Posterior vena cava (tissue), 2 donors: ENCODE measurements at regions of chr12 and their contacts with region 1.

Region 1: GRCh38 chr12:34022079-34022830 is at the start of gene ALG10:
- DNase-seq: peak; percentile 99
- total RNA-seq, gene ALG10: 5.2 to 7.9 TPM

Region 2: DNA sequence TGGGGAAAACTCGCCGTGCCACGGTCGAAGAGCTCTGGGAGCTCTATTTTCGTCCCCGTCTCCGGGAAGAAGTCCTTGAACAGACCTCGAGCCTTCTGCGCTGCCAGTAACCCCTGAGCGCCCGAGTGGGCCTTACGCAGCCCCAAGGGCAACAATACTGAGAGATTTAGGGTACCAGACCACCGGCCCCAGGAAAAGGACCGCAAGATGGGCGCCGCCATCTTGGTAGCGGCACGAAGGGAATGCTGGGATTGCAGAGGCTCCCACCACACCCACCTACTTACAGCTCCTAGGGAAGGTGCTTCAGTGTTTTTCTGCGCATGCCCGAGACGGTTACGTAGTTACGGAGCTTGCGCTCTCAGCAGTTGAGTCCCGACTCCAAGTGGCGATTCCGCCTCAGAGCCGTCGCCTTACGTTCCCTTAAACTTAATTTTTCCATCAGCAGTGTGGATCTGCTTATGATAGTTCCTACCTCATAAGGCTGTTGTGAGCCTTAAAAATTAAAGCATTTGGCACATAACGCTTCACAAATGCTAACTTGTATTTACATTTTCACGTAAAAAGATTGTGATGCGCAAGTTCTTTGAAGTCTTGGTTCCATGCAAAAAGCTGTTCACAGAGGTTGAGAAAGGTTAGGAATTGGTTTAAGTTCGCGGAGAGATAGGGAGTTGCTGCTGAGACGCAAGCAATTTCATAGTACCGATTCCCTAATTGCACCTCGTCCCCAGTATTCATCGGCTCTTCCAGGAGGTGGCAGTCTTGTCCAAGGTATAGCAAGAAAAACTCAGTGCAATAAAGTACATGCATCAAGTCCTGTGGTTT is 1266.4 kb before region 1 on chr12 and contains the start of gene YARS2:
- intact Hi-C with region 1: loop called in 1 of 2 experiments (anchors 10 kb)
- DNase-seq: peak; percentile 97
- total RNA-seq, gene YARS2: 9.2 to 10.3 TPM

Region 3: GRCh38 chr12:33671676-33672075 is 350.6 kb before region 1 on chr12:
- intact Hi-C with region 1: no loop called
- DNase-seq: no peak

Region 4: DNA sequence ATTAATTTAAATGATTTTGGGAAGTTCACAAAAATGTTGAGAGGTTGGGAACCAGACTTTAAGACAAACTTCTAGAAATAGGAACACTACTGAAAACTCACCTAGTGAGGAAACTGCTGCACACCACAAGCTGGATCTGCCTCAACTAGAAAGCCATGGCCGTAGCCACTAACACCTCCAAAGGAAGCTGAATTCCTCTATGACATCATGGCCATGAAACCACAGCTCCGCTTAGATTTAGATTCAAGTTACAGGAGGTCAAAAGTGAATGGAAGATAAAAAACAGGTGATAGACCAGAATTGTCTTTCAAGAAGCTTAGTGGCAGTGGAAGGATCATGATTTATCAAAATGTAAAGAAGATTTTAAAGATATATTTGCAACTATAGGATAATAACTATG is 208.7 kb before region 1 on chr12:
- intact Hi-C with region 1: no loop called
- DNase-seq: no peak

Region 5: GRCh38 chr12:33892411-33892810 is 129.8 kb before region 1 on chr12:
- intact Hi-C with region 1: no loop called
- DNase-seq: no peak

Region 6: DNA sequence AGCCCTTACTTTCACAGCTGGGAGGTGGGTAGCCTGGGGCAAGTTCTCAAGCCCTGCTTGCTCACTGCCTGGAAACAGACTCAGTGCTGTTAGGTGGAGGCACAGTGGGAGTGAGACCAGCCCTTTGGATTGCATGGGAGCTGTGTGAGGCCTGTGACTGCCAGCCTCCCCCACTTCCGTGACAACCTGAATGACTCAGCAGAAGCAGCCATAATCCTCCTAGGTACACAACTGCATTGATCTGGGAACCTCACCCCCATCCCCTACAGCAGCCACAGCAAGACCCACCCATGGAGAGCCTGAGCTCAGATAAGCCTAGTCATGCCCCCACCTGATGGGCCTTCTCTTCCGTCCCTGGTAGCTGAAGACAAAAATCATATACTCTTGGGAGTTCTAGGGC is 26.5 kb after region 1 on chr12:
- intact Hi-C with region 1: no loop called
- DNase-seq: no peak